Activated CD4-positive, alpha-beta T cell treated with anti-CD3 and anti-CD28 coated beads for 36 hours (primary cell): ENCODE measurements at regions of chr15 and their contacts with region 1.

Region 1: DNA sequence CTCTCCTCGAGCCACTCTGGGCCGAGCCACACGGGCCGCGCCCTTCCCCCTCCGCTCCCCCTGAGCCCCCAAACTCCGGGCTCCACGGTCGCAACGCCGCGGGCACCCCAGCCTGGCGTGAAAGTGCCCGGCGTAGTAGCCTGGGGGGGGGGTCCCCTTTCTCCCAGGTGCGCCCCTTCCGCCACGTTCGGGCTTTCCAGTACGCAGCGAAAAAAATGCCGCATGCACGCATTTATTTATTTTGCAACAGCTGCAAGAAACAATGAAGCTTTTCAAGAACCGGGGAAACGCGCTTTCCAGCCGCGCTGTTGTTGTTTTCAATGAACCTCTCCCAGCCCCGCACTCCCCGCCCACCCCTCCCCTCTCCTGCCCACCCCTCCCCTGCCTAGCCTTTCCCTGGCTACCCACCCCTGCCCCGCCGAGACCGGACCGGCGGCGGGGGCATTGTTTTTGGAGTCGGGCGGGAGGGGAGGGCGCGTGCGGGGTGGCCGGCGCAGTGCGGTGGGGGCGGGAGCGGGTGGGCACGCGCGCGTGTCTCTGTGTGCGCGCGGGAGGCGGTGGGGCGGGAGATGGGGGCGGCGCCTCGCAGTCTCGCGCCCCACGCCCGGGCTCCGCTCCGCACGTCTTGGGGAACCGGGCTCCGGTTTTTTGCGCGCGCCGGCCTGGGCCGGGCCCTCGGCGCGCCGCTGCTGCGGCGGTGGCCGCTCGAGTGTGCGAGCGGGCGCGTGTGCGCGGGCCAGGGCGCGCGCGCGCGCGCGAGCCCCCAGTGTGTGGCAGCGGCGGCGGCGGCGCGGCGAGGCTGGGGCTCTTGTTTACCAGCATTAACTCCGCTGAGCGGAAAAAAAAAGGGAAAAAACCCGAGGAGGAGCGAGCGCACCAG is at the start of gene IGF1R:
- DNase-seq: peak; percentile 91
- ATAC-seq: peak; percentile 56
- H3K4me3 Mint-ChIP-seq: peak within 1 kb of the TSS; percentile 89
- H3K27ac Mint-ChIP-seq: peak within 1 kb of the TSS; percentile 91
- H3K4me1 Mint-ChIP-seq: peaks cover 21% of the 10 kb centered on the region
- H3K27me3 Mint-ChIP-seq: peaks cover 17% of the 10 kb centered on the region
- total RNA-seq, gene IGF1R: 26.3 to 43.7 TPM

Region 2: GRCh38 chr15:98518823-98519561 is 129.0 kb before region 1 on chr15:
- CTCF ChIA-PET with region 1: interaction called, 29 read pairs
- POLR2A ChIA-PET with region 1: no interaction called
- intact Hi-C with region 1: loop called (anchors 1 kb)
- DNase-seq: peak; percentile 70
- ATAC-seq: peak; percentile 85
- H3K4me3 Mint-ChIP-seq: no peak overlapping the region
- H3K27ac Mint-ChIP-seq: no peak overlapping the region
- H3K4me1 Mint-ChIP-seq: no peaks in the 10 kb centered on the region
- H3K27me3 Mint-ChIP-seq: peaks cover 3% of the 10 kb centered on the region

Region 3: DNA sequence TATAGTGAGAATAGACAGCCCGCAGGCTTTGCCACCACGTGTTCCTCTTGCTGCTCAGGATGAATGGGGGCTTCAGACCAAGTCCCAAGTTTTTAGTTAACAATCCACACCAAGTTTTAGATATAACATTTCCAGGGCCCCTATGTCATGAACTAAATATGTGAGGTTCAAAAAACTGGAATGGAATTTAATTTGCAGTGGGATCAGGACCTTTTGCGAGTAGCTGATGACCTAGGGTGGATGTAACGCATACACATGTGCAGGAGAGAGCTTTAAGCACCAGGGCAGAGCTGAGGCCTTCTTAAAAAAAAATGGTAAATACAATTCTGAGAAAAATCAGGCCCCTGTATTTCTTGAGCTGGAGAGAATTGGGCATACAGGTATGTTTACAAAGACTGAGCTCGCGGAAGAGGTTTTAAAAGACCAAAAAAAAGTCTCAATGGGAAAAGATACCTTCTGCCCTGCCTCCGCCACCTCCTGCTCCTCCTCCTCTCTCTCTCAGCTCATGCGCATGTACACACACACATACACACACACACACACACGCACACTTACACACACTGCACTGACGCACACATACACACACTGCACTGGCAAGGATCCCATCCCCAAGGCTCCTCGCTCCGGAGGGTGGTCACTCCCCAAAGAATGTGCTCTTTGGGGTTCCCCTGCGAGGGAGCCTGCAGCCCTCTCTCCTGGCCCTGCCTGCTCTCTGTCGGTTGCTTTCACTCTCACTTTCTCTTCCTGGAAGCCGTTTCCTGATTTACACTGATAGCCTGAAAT is 47.9 kb before region 1 on chr15:
- CTCF ChIA-PET with region 1: interaction called, 5 read pairs
- POLR2A ChIA-PET with region 1: no interaction called
- intact Hi-C with region 1: loop called (anchors 1 kb)
- DNase-seq: peak; percentile 70
- ATAC-seq: peak; percentile 91
- H3K4me3 Mint-ChIP-seq: peak overlapping the region; percentile 77
- H3K27ac Mint-ChIP-seq: peak overlapping the region; percentile 92
- H3K4me1 Mint-ChIP-seq: peaks cover 17% of the 10 kb centered on the region
- H3K27me3 Mint-ChIP-seq: no peaks in the 10 kb centered on the region

Region 4: GRCh38 chr15:98668566-98669308 is 20.7 kb after region 1 on chr15:
- CTCF ChIA-PET with region 1: interaction called, 5 read pairs
- POLR2A ChIA-PET with region 1: interaction called, 5 read pairs
- intact Hi-C with region 1: loop called in 1 of 2 experiments (anchors 1 kb)
- DNase-seq: peak; percentile 81
- ATAC-seq: peak; percentile 99
- H3K4me3 Mint-ChIP-seq: peak overlapping the region; percentile 24
- H3K27ac Mint-ChIP-seq: peak overlapping the region; percentile 80
- H3K4me1 Mint-ChIP-seq: peaks cover 79% of the 10 kb centered on the region
- H3K27me3 Mint-ChIP-seq: no peaks in the 10 kb centered on the region

Region 5: GRCh38 chr15:98865397-98866339 is 217.7 kb after region 1 on chr15:
- CTCF ChIA-PET with region 1: interaction called, 3 read pairs
- POLR2A ChIA-PET with region 1: no interaction called
- intact Hi-C with region 1: loop called (anchors 1 to 2 kb)
- DNase-seq: peak; percentile 87
- ATAC-seq: peak; percentile 95
- H3K4me3 Mint-ChIP-seq: peak overlapping the region; percentile 82
- H3K27ac Mint-ChIP-seq: peak overlapping the region; percentile 92
- H3K4me1 Mint-ChIP-seq: peaks cover 42% of the 10 kb centered on the region
- H3K27me3 Mint-ChIP-seq: no peaks in the 10 kb centered on the region

Region 6: GRCh38 chr15:98904544-98904943 is 256.5 kb after region 1 on chr15:
- CTCF ChIA-PET with region 1: no interaction called
- POLR2A ChIA-PET with region 1: no interaction called
- intact Hi-C with region 1: no loop called
- DNase-seq: peak; percentile 27
- ATAC-seq: peak; percentile 49
- H3K4me3 Mint-ChIP-seq: no peak overlapping the region
- H3K27ac Mint-ChIP-seq: no peak overlapping the region
- H3K4me1 Mint-ChIP-seq: peaks cover 18% of the 10 kb centered on the region
- H3K27me3 Mint-ChIP-seq: no peaks in the 10 kb centered on the region

Region 7: GRCh38 chr15:99076552-99077308 is 428.7 kb after region 1 on chr15:
- CTCF ChIA-PET with region 1: interaction called, 3 read pairs
- POLR2A ChIA-PET with region 1: no interaction called
- intact Hi-C with region 1: loop called (anchors 5 to 10 kb)
- DNase-seq: peak; percentile 58
- ATAC-seq: peak; percentile 87
- H3K4me3 Mint-ChIP-seq: peak overlapping the region; percentile 65
- H3K27ac Mint-ChIP-seq: peak overlapping the region; percentile 89
- H3K4me1 Mint-ChIP-seq: peaks cover 6% of the 10 kb centered on the region
- H3K27me3 Mint-ChIP-seq: peaks cover 10% of the 10 kb centered on the region